ENCODE measurements at regions of chr3 and their contacts with region 1.

Region 1: DNA sequence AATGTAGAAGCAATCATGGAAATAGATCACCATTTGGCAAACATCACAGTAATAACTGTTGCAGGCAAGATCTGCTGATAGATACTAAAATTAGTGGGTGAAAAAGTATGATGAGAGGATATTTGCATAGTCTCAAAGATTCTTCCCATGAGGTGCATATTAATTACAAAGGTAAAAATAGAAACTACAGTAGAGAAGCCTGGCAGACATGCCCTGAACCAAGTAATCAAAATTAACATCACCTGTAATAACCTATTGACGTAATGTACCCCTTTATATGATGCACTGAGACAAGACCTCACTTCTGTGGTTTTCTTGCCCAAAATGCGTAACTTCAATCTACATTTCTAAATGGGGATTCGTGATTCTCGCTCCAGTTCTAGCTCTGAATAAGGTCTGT is 14.4 kb downstream of the POMGNT2 start:
- DNase-seq: no peak
- ATAC-seq: no peak
- H3K4me3 ChIP-seq: no peak overlapping the region
- H3K27ac ChIP-seq: no peak overlapping the region
- H3K4me1 ChIP-seq: peaks cover 0 to 4% of the 10 kb centered on the region in 2 experiments; a peak in 3 of 5 replicates
- H3K27me3 ChIP-seq: peaks cover 0 to 5% of the 10 kb centered on the region in 2 experiments; a peak in 1 of 5 replicates
- CTCF ChIP-seq: no peak
- EP300 ChIP-seq: no peak
- POLR2A ChIP-seq: no peak
- RAD21 ChIP-seq: no peak

Region 2: DNA sequence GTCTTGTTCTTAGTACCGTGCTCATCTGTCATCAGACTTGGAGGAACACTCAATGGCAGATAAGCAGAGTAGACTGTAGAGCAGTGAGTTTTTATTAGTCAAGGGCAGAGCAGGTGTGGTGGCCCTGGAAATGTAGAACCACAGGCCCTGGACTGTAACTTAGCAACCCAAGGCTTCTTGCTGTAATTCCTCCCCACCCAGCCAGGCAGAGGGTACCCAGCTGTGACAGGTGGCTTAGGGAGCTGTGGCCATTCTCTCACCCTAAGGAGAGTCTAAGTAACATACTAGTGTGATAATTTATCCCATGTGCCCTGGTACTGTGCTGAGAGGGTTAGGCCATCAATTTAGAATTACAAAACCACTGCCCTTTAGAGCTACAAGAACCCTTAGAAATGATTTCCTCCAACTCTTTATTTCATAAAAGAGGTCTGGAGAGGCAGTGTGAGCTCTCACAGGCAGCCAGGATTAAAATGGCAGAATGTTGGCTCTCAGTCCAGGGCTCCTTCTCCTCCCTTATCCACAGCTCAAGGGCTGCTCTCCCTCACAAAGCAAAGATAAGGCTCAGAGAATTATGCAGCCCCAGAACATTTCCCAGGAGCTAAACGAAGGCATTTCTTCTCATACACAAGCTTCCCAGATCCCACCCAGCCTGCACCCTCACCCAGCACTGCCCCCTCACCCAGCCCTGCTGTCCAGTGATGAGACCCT is 11.4 kb after region 1 on chr3:
- CTCF ChIA-PET with region 1: no interaction called
- POLR2A ChIA-PET with region 1: interaction called, 10 read pairs
- in situ Hi-C with region 1: no loop called
- intact Hi-C with region 1: no loop called
- DNase-seq: peak in 1 of 4 experiments; percentile 15
- ATAC-seq: no peak
- H3K4me3 ChIP-seq: no peak overlapping the region
- H3K27ac ChIP-seq: no peak overlapping the region
- H3K4me1 ChIP-seq: peaks cover 20 to 21% of the 10 kb centered on the region in 2 experiments; a peak in 4 of 5 replicates
- H3K27me3 ChIP-seq: no peaks in the 10 kb centered on the region
- CTCF ChIP-seq: no peak
- EP300 ChIP-seq: no peak
- POLR2A ChIP-seq: no peak
- RAD21 ChIP-seq: no peak

Measured in K562 (cell line).